Ascending aorta (tissue), 2 donors: ENCODE measurements at regions of chr21 and their contacts with region 1.

Region 1: GRCh38 chr21:45973659-45974072 is 7.9 kb upstream of the COL6A1 start:
- DNase-seq: peak in 1 of 2 donors; percentile 93
- H3K4me3 ChIP-seq: peak overlapping the region; percentile 39 to 75
- H3K27ac ChIP-seq: peak overlapping the region; percentile 98 to 99
- H3K4me1 ChIP-seq: peaks cover 36 to 43% of the 10 kb centered on the region in 2 donors
- H3K27me3 ChIP-seq: no peaks in the 10 kb centered on the region
- CTCF ChIP-seq: peak; percentile 73 to 81 (median 79)

Region 2: GRCh38 chr21:46060596-46061061 is 87.0 kb after region 1 on chr21:
- intact Hi-C with region 1: loop called (anchors 2 kb)
- DNase-seq: peak; percentile 70 to 96
- H3K4me3 ChIP-seq: no peak overlapping the region
- H3K27ac ChIP-seq: peak overlapping the region; percentile 94 to 99
- H3K4me1 ChIP-seq: peaks cover 29 to 45% of the 10 kb centered on the region in 2 donors
- H3K27me3 ChIP-seq: no peaks in the 10 kb centered on the region
- CTCF ChIP-seq: no peak

Region 3: DNA sequence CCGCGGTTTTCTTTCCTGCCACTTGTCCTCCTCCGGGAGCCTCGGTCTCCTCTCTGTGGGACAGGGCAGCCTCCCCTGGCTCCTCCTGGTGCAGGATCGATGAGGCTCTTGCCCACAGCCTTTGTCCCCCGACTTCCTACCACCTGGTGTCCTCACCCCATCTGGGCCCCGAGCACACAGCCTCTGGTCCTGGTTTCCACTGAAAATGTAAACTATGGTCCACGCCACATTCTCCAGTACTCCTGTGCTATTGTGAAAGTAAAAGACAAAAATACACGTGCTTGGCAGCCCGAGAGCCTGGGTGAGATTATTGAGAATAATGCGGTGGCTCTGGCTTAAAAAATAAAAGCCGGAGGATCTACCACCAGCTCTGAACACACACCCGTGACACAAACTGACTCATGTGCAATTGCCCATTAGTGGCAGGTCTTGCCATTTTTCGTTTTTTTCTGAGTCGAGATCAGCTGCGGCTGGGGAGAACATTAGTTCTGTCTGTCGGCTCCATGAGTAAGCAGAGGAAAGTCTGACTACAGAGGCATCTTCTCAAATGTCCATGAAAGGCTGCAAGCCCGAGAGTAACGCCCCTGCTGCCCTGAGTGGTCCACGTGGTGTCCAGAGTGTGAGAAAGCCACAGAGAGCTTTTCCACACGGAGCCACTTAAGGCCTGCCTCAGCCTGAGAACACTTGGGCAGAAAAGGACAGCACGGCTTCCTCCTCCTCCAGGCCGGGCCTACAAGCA is 118.5 kb after region 1 on chr21:
- intact Hi-C with region 1: loop called (anchors 1 kb)
- DNase-seq: peak; percentile 87 to 97
- H3K4me3 ChIP-seq: peak overlapping the region in 1 of 2 donors; percentile 52
- H3K27ac ChIP-seq: peak overlapping the region; percentile 98 to 99
- H3K4me1 ChIP-seq: peaks cover 21 to 22% of the 10 kb centered on the region in 2 donors
- H3K27me3 ChIP-seq: no peaks in the 10 kb centered on the region
- CTCF ChIP-seq: no peak

Region 4: GRCh38 chr21:46097336-46098293 is 123.9 kb after region 1 on chr21 and contains the start of gene COL6A2:
- intact Hi-C with region 1: loop called (anchors 1 kb)
- DNase-seq: peak; percentile 8 to 83
- H3K4me3 ChIP-seq: peak within 1 kb of the TSS; percentile 85 to 98
- H3K27ac ChIP-seq: peak within 1 kb of the TSS; percentile 98 to 99
- H3K4me1 ChIP-seq: peaks cover 14 to 20% of the 10 kb centered on the region in 2 donors
- H3K27me3 ChIP-seq: no peaks in the 10 kb centered on the region
- CTCF ChIP-seq: peak in 2 of 3 experiments; percentile 39 to 66
- total RNA-seq, gene COL6A2: 1,704 TPM

Region 5: GRCh38 chr21:46110499-46111192 is 137.0 kb after region 1 on chr21:
- intact Hi-C with region 1: loop called (anchors 1 kb)
- DNase-seq: peak; percentile 8 to 89
- H3K4me3 ChIP-seq: peak overlapping the region in 1 of 2 donors; percentile 26
- H3K27ac ChIP-seq: peak overlapping the region; percentile 58 to 61
- H3K4me1 ChIP-seq: peaks cover 12 to 24% of the 10 kb centered on the region in 2 donors
- H3K27me3 ChIP-seq: no peaks in the 10 kb centered on the region
- CTCF ChIP-seq: peak; percentile 27 to 47 (median 34)

Region 6: DNA sequence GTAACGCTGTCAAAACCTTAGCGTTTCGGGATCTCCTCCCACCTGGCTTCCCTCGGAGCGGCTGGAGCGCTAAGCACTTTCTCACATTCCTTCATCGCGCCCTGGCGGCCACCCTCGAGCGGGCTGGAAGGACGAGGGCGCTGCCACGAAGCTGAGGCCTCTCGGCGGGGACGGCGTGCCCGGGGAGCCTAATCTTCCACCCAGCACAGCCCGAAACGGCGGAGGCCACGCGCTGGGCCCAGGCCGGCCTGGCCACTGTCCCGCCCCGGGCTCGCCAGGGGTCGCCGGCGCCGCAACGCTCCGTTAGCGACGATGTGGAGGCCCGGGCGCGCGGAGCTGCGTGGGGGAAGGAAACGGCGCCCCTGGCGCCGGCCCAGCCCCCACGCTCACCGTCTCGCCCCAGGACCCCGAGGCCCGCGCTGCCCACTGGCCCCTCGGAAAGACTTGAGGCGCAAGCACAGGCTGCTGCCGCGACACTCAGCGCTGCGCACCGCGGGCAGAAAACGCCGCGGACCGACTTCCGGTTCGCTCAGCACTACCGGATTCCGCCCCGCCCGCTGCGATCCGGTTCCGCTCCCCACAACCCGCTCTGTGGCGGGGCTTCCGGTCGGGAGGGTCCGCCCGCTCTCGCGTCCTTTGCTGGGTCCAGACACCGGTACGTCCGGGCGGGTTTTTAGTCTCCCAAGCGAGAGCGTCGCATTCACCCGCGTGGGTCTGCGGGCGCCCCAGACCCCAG is 312.3 kb after region 1 on chr21 and contains the start of gene YBEY:
- intact Hi-C with region 1: loop called (anchors 10 kb)
- DNase-seq: peak; percentile 38 to 92
- H3K4me3 ChIP-seq: peak within 1 kb of the TSS; percentile 72 to 92
- H3K27ac ChIP-seq: peak within 1 kb of the TSS; percentile 92 to 96
- H3K4me1 ChIP-seq: peaks cover 19 to 30% of the 10 kb centered on the region in 2 donors
- H3K27me3 ChIP-seq: no peaks in the 10 kb centered on the region
- CTCF ChIP-seq: peak; percentile 18 to 43 (median 34)
- total RNA-seq, gene YBEY: 0.53 TPM